B cell (primary cell): ENCODE measurements at regions of chr12 and their contacts with region 1.

Region 1: DNA sequence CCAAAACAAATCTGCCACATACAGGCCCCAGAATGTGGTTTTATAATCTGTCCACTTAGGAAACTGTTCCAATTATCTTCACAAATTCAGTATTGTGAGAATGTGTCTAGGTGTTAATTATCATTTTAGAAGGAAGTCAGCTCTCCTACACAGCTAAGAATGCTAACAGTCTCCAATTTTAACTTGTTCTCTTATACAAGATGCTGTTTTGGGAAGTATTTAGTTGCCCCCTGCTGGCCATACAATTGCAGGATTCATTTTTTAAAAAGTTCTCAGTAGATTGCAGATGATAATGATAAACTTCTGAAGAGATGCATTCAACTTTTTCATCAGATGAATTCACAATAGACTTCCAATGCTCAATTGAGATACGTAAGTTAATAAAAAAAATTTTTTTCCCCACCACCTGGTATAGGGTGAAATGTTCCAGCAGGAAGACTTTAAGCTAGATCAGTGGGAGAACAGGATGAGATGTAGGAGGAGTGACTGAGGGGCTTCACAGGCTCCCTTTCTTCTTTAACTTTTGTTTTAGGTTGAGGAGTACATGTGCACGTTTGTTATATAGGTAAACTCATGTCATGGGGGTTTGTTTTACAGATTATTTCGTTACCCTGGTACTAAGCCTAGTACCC is 27.3 kb upstream of the OSBPL8 start:
- DNase-seq: peak; percentile 69
- ATAC-seq: peak; percentile 57
- H3K4me3 ChIP-seq: no peak overlapping the region
- H3K4me3 Mint-ChIP-seq: no peak overlapping the region
- H3K27ac ChIP-seq: no peak overlapping the region
- H3K27ac Mint-ChIP-seq: no peak overlapping the region
- H3K4me1 ChIP-seq: no peaks in the 10 kb centered on the region
- H3K4me1 Mint-ChIP-seq: peaks cover 5% of the 10 kb centered on the region
- H3K27me3 ChIP-seq: no peaks in the 10 kb centered on the region
- H3K27me3 Mint-ChIP-seq: no peaks in the 10 kb centered on the region
- CTCF ChIP-seq: peak; percentile 92

Region 2: GRCh38 chr12:76158518-76159321 is 428.2 kb before region 1 on chr12:
- CTCF ChIA-PET with region 1: interaction called, 3 read pairs
- POLR2A ChIA-PET with region 1: no interaction called
- intact Hi-C with region 1: loop called (anchors 2 kb)
- DNase-seq: peak; percentile 82
- ATAC-seq: peak; percentile 99
- H3K4me3 ChIP-seq: peak overlapping the region; percentile 5 to 68 (median 45)
- H3K4me3 Mint-ChIP-seq: peak overlapping the region; percentile 91
- H3K27ac ChIP-seq: peak overlapping the region; percentile 14 to 76
- H3K27ac Mint-ChIP-seq: peak overlapping the region; percentile 94
- H3K4me1 ChIP-seq: peaks cover 9 to 16% of the 10 kb centered on the region in 2 donors
- H3K4me1 Mint-ChIP-seq: peaks cover 25% of the 10 kb centered on the region
- H3K27me3 ChIP-seq: no peaks in the 10 kb centered on the region
- H3K27me3 Mint-ChIP-seq: no peaks in the 10 kb centered on the region
- CTCF ChIP-seq: peak; percentile 83

Region 3: GRCh38 chr12:76384560-76384959 is 202.3 kb before region 1 on chr12:
- CTCF ChIA-PET with region 1: interaction called, 3 read pairs
- POLR2A ChIA-PET with region 1: no interaction called
- intact Hi-C with region 1: loop called (anchors 10 kb)
- DNase-seq: no peak
- ATAC-seq: no peak
- H3K4me3 ChIP-seq: no peak overlapping the region
- H3K4me3 Mint-ChIP-seq: no peak overlapping the region
- H3K27ac ChIP-seq: no peak overlapping the region
- H3K27ac Mint-ChIP-seq: no peak overlapping the region
- H3K4me1 ChIP-seq: no peaks in the 10 kb centered on the region
- H3K4me1 Mint-ChIP-seq: no peaks in the 10 kb centered on the region
- H3K27me3 ChIP-seq: no peaks in the 10 kb centered on the region
- H3K27me3 Mint-ChIP-seq: no peaks in the 10 kb centered on the region
- CTCF ChIP-seq: no peak

Region 4: GRCh38 chr12:76455582-76456345 is 131.1 kb before region 1 on chr12:
- CTCF ChIA-PET with region 1: interaction called, 30 read pairs
- POLR2A ChIA-PET with region 1: no interaction called
- intact Hi-C with region 1: loop called (anchors 5 kb)
- DNase-seq: peak; percentile 50
- ATAC-seq: peak; percentile 41
- H3K4me3 ChIP-seq: no peak overlapping the region
- H3K4me3 Mint-ChIP-seq: no peak overlapping the region
- H3K27ac ChIP-seq: no peak overlapping the region
- H3K27ac Mint-ChIP-seq: no peak overlapping the region
- H3K4me1 ChIP-seq: peaks cover 0 to 4% of the 10 kb centered on the region in 2 donors
- H3K4me1 Mint-ChIP-seq: peaks cover 13% of the 10 kb centered on the region
- H3K27me3 ChIP-seq: no peaks in the 10 kb centered on the region
- H3K27me3 Mint-ChIP-seq: no peaks in the 10 kb centered on the region
- CTCF ChIP-seq: peak; percentile 70